A549 (cell line): ENCODE measurements at regions of chr2 and their contacts with region 1.

Region 1: GRCh38 chr2:86234563-86235131 is 35.4 kb downstream of the MRPL35 start:
- DNase-seq: no peak
- ATAC-seq: no peak
- H3K4me3 ChIP-seq: no peak overlapping the region
- H3K27ac ChIP-seq: no peak overlapping the region
- H3K4me1 ChIP-seq: no peaks in the 10 kb centered on the region
- CTCF ChIP-seq: no peak
- EP300 ChIP-seq: no peak
- POLR2A ChIP-seq: no peak
- RAD21 ChIP-seq: no peak

Region 2: DNA sequence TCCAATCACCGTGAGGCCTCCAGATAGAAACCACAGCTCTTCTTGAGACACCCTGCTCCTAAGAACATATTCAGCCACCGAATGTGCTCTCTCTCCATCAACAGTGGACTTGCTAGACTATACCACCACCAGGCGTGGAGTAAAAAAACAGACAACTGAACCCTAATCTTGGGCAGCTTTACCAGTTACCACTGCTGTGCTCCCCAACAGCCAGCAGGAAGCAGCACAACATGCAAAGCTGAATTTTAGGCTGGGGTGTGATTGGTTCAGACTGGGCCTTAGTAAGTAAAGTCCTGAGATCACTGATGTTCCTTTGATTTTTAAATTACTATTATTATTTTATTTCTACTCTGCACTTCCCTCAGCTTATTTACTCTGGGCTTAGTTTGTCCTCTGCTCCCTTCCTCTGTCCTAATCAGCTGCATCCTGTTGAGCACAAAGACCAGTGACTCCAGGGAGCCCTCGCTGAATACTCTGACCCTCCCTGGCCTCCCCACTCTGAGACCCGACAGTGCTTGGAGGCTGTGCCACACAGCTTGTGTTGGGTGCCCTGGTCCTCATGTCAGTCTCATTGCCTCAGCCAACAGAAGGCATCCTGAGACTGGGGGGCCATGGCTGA is 13.5 kb before region 1 on chr2:
- CTCF ChIA-PET with region 1: interaction called, 16 read pairs
- POLR2A ChIA-PET with region 1: no interaction called
- DNase-seq: peak; percentile 44 to 61
- ATAC-seq: peak; percentile 33 to 75; a peak in 4 of 6 replicates
- H3K4me3 ChIP-seq: no peak overlapping the region
- H3K27ac ChIP-seq: no peak overlapping the region
- H3K4me1 ChIP-seq: no peaks in the 10 kb centered on the region
- CTCF ChIP-seq: peak; percentile 64
- EP300 ChIP-seq: no peak
- POLR2A ChIP-seq: no peak
- RAD21 ChIP-seq: peak; percentile 69 to 73

Region 3: DNA sequence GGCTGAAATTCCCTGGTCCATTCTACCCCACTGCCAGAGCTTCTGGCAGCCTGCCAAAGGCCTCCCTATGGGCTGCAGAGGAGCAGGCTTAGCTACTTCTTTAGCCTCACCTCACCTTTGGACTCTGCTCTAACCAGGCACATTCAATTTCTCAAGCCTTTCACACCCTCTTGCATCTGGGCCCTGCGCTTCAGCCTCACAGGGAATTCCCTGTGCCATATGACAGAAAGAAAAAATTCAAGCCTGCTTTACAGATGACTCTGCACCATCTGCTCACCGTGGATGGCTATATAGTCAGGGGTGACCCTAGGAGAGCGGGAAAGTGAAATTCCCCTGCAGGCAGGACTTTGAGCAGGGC is 40.2 kb after region 1 on chr2:
- CTCF ChIA-PET with region 1: no interaction called
- POLR2A ChIA-PET with region 1: no interaction called
- DNase-seq: no peak
- ATAC-seq: peak; percentile 33 to 59; a peak in 4 of 6 replicates
- H3K4me3 ChIP-seq: no peak overlapping the region
- H3K27ac ChIP-seq: 0 out of 6 replicates have a peak overlapping the region, but pooled peaks of 1 of the 2 experiments have one; percentile 23
- H3K4me1 ChIP-seq: peaks cover 14% of the 10 kb centered on the region
- CTCF ChIP-seq: no peak
- EP300 ChIP-seq: no peak
- POLR2A ChIP-seq: no peak
- RAD21 ChIP-seq: no peak

Region 4: GRCh38 chr2:86464652-86465051 is 230.0 kb after region 1 on chr2:
- CTCF ChIA-PET with region 1: no interaction called
- POLR2A ChIA-PET with region 1: no interaction called
- DNase-seq: no peak
- ATAC-seq: no peak
- H3K4me3 ChIP-seq: no peak overlapping the region
- H3K27ac ChIP-seq: no peak overlapping the region
- H3K4me1 ChIP-seq: no peaks in the 10 kb centered on the region
- CTCF ChIP-seq: no peak
- EP300 ChIP-seq: no peak
- POLR2A ChIP-seq: no peak
- RAD21 ChIP-seq: no peak

Region 5: GRCh38 chr2:86747711-86748639 is 513.3 kb after region 1 on chr2:
- CTCF ChIA-PET with region 1: no interaction called
- POLR2A ChIA-PET with region 1: no interaction called
- DNase-seq: peak in 1 of 2 experiments; percentile 35
- ATAC-seq: no peak; a peak in 1 of 6 replicates
- H3K4me3 ChIP-seq: no peak overlapping the region
- H3K27ac ChIP-seq: peak overlapping the region; percentile 19 to 34; a peak in 3 of 6 replicates
- H3K4me1 ChIP-seq: peaks cover 10% of the 10 kb centered on the region; the same call in 2 of the 3 replicates
- CTCF ChIP-seq: no peak
- EP300 ChIP-seq: no peak
- POLR2A ChIP-seq: no peak
- RAD21 ChIP-seq: no peak